MCF 10A (cell line): ENCODE measurements at regions of chr7 and their contacts with region 1.

Region 1: GRCh38 chr7:144738708-144739314 is 97.0 kb downstream of the TPK1 start:
- DNase-seq: peak; percentile 52
- H3K4me3 Mint-ChIP-seq: no peak overlapping the region
- H3K27ac Mint-ChIP-seq: no peak overlapping the region
- H3K4me1 Mint-ChIP-seq: peaks cover 6% of the 10 kb centered on the region
- H3K27me3 Mint-ChIP-seq: no peaks in the 10 kb centered on the region
- CTCF ChIP-seq: peak; percentile 66

Region 2: DNA sequence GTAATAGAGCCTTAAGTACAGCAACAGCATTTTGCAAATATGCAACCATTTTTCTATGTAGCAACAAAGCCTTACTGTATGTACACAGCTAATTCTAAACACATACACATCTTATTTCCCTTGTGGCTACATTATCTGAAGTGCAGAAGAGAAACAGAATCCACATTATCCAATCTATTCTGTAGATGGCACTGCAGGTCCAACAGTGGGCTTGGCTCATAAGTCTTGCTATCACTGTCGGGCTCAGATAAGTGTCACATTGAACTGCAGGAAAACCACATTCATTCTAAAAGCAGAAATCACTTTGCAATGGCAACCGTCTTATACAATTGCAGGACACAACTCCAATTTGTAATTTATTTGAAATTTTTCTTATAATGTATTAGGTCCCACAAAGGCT is 225.5 kb before region 1 on chr7:
- CTCF ChIA-PET with region 1: interaction called, 7 read pairs
- POLR2A ChIA-PET with region 1: interaction called, 3 read pairs
- intact Hi-C with region 1: loop called (anchors 10 kb)
- DNase-seq: peak; percentile 49
- H3K4me3 Mint-ChIP-seq: no peak overlapping the region
- H3K27ac Mint-ChIP-seq: no peak overlapping the region
- H3K4me1 Mint-ChIP-seq: no peaks in the 10 kb centered on the region
- H3K27me3 Mint-ChIP-seq: no peaks in the 10 kb centered on the region
- CTCF ChIP-seq: peak; percentile 47

Region 3: DNA sequence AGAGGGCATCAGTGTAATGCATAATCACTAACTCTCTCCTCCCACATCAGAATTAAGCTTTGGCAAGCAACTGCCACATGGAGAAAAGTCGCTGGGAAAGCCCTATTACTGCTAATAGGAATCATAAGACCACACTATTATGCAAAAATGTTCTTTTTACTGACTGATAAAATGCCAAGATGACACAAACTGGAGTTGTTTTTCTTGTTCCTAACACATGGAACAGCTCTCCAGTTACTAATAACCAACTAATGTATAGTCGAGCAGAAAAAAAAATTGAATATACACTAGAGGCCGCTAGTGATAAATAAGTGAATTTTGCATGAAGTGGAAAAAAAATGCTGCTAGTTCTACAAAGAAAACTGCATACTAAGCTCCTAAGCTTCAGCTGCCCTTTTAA is 68.6 kb before region 1 on chr7:
- CTCF ChIA-PET with region 1: interaction called, 14 read pairs
- POLR2A ChIA-PET with region 1: interaction called, 3 read pairs
- intact Hi-C with region 1: no loop called
- DNase-seq: peak; percentile 33
- H3K4me3 Mint-ChIP-seq: no peak overlapping the region
- H3K27ac Mint-ChIP-seq: no peak overlapping the region
- H3K4me1 Mint-ChIP-seq: peaks cover 19% of the 10 kb centered on the region
- H3K27me3 Mint-ChIP-seq: no peaks in the 10 kb centered on the region
- CTCF ChIP-seq: peak; percentile 34

Region 4: DNA sequence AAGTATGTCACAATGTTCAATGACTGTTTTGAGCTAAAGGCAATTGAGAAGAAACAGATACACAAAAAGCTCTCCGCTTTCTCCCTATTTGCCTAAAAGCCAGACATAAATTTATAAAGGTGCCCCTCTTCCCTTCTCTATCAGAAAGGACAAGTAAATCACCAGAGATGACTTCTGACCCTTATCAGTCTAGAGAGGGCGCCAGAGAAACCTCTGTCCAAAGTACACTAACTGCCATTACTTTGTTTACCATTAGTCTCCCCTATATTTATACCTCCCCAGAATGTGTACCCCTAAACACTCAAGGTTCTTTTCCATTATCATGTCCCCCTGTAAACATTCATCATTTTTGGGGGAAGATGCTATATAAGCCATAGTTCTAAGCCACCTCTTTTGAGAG is 47.7 kb after region 1 on chr7:
- CTCF ChIA-PET with region 1: interaction called, 14 read pairs
- POLR2A ChIA-PET with region 1: interaction called, 3 read pairs
- intact Hi-C with region 1: no loop called
- DNase-seq: peak; percentile 23
- H3K4me3 Mint-ChIP-seq: no peak overlapping the region
- H3K27ac Mint-ChIP-seq: no peak overlapping the region
- H3K4me1 Mint-ChIP-seq: no peaks in the 10 kb centered on the region
- H3K27me3 Mint-ChIP-seq: no peaks in the 10 kb centered on the region
- CTCF ChIP-seq: no peak

Region 5: DNA sequence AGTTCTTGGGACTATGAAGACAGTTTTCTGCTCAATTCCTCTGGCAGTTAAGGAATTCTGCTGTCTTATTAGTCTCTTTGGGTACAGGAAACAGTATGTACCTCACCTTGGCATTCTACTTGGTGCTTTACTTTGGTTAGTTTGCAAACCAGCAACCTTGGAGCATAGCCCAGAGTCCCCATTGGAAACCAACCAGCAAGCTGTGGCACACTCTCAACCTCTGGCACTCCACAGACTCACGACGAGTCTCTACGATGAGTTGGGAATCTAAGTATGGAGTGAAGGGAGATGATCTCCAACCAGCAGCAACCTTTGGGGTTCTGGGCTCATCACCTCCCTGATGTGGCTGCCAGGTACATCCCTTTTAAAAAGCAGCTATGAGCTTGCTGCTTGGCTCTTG is 53.2 kb after region 1 on chr7:
- CTCF ChIA-PET with region 1: interaction called, 12 read pairs
- POLR2A ChIA-PET with region 1: interaction called, 3 read pairs
- intact Hi-C with region 1: no loop called
- DNase-seq: no peak
- H3K4me3 Mint-ChIP-seq: no peak overlapping the region
- H3K27ac Mint-ChIP-seq: no peak overlapping the region
- H3K4me1 Mint-ChIP-seq: peaks cover 5% of the 10 kb centered on the region
- H3K27me3 Mint-ChIP-seq: no peaks in the 10 kb centered on the region
- CTCF ChIP-seq: no peak

Region 6: DNA sequence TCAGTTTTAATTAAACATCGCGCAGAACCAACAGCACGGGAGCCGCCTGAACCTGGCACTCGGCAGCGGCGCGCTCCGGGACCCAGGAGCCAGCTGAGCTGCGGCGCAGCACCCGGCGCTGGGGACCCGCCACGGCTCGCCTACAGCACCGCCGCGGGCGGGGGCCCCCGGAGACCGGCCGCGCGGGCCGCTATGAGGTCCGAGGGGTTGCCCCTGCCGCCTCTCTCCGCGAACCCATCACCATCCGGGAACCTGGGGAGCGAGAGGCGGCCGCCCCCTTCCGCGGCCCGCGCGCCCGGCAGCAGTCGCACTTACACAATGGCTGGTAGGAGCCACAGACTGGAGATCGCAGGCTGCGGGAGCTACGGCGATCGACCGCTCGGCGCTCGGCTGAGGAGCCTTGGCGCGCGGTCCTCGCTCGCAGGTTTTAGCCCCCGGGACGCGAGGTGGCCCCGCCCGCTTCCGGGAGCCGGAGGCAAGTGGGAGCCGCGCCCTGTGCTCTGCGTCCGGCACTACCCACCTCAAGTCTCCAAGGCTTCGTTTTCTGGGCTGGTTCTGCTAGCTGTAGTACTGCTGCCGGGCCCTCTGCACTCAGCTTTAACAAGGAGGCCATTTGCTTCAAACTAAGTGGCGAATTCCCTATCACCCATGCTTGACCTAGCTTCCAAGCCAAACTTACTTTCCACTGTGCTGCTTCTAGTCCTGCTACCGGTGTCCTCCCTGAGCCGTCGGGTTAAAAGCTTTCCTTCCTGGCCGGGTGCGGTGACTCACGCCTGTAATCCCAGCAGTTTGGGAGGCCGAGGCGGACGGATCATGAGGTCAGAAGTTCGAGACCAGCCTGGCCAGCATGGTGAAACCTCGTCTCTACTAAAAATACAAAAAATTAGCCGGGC is 97.1 kb after region 1 on chr7 and contains the start of gene TPK1:
- CTCF ChIA-PET with region 1: interaction called, 3 read pairs
- POLR2A ChIA-PET with region 1: interaction called, 4 read pairs
- intact Hi-C with region 1: loop called (anchors 2 kb)
- DNase-seq: peak; percentile 91
- H3K4me3 Mint-ChIP-seq: peak within 1 kb of the TSS; percentile 98
- H3K27ac Mint-ChIP-seq: peak within 1 kb of the TSS; percentile 95
- H3K4me1 Mint-ChIP-seq: peaks cover under 1% of the 10 kb centered on the region
- H3K27me3 Mint-ChIP-seq: no peaks in the 10 kb centered on the region
- CTCF ChIP-seq: no peak
- total RNA-seq, gene TPK1: 8.8 TPM in 2 replicates

Region 7: DNA sequence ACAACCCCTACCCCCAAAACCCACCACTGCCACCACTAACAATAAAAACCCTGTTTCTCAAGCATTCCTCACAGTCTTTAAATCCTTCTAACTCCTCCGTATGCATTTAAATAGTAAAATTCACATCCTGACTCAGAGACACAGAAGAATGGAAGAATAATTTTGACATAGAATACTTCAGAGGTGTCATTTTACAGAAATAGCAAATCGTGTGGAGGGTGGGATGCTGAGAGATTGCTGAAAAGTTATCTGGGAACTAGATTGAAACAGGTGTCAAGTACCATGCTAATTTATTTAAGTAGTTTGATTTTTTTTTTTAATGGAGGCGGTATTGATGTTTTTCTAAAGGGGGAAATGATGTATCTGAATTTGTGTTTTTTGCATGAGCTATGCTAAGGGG is 672.3 kb after region 1 on chr7:
- CTCF ChIA-PET with region 1: no interaction called
- POLR2A ChIA-PET with region 1: no interaction called
- intact Hi-C with region 1: no loop called
- DNase-seq: no peak
- H3K4me3 Mint-ChIP-seq: no peak overlapping the region
- H3K27ac Mint-ChIP-seq: no peak overlapping the region
- H3K4me1 Mint-ChIP-seq: peaks cover 20% of the 10 kb centered on the region
- H3K27me3 Mint-ChIP-seq: no peaks in the 10 kb centered on the region
- CTCF ChIP-seq: no peak

Region 8: DNA sequence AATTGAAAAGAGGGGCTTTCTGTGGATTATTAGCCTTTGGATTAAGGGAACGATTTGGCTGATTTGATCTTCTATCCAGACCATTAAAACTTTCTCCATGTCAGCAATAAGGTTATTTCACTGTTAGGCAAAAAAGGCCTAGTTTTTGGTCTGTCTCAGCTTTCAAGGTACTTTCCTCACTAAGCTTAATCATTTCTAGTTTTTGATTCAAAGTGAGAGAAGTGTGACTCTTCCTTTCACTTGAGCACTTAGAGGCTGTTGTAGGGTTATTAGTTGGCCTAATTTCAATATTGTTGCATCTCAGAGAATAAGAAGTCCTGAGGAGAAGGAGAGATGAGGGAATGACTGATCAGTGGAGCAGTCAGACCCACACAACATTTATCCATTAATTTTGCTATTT is 693.0 kb after region 1 on chr7:
- CTCF ChIA-PET with region 1: no interaction called
- POLR2A ChIA-PET with region 1: no interaction called
- intact Hi-C with region 1: no loop called
- DNase-seq: no peak
- H3K4me3 Mint-ChIP-seq: no peak overlapping the region
- H3K27ac Mint-ChIP-seq: no peak overlapping the region
- H3K4me1 Mint-ChIP-seq: peaks cover 4% of the 10 kb centered on the region
- H3K27me3 Mint-ChIP-seq: no peaks in the 10 kb centered on the region
- CTCF ChIP-seq: no peak